ENCODE measurements at regions of chr1 and their contacts with region 1.

Region 1: GRCh38 chr1:44377925-44378784 is 23.1 kb upstream of the ERI3 start:
- DNase-seq: peak; percentile 24
- H3K4me3 ChIP-seq: no peak overlapping the region
- H3K27ac ChIP-seq: no peak overlapping the region
- H3K4me1 ChIP-seq: no peaks in the 10 kb centered on the region
- H3K27me3 ChIP-seq: peaks cover 3% of the 10 kb centered on the region
- CTCF ChIP-seq: peak; percentile 43 to 60 (median 49)
- EP300 ChIP-seq: no peak
- POLR2A ChIP-seq: no peak

Region 2: DNA sequence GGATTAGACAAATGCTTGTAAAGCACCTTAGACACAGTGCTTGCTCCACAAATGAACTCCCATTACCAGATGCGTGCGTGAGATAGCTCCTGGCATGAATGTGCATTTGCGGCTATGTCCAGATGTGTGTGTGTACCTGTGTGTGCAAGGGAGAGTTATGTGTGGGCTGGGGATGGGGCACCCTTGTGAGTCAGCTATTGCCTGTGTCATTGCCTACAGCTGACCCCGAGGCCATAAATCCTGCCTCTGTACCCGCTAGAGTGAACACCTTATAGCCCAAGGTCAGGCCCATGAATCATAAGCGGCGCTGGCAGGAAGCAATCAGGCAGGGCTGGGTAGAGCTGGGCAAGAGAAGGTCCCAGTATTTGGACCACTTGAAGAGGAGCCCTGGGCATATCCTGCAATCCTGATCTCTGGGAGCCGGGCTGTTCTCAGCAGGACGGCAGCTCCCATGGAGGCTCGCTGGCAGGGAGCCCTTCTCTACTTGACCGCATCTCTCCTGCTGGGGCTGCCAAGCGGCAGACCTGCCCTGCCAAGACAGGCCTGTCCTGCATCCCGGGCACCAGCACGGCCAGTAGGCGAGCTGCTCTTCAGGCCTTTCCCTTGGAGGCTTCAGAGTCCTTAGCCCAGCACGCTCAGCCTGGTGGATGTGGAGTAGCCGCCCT is 209.8 kb after region 1 on chr1:
- in situ Hi-C with region 1: loop called in 2 of 4 experiments (anchors 10 kb)
- intact Hi-C with region 1: loop called (anchors 10 kb)
- DNase-seq: peak; percentile 65
- H3K4me3 ChIP-seq: no peak overlapping the region
- H3K27ac ChIP-seq: peak overlapping the region in 1 of 4 donors; percentile 17
- H3K4me1 ChIP-seq: peaks cover 0 to 30% (median 7%) of the 10 kb centered on the region in 4 donors
- H3K27me3 ChIP-seq: peaks cover 78% of the 10 kb centered on the region
- CTCF ChIP-seq: no peak
- EP300 ChIP-seq: no peak
- POLR2A ChIP-seq: no peak

Region 3: DNA sequence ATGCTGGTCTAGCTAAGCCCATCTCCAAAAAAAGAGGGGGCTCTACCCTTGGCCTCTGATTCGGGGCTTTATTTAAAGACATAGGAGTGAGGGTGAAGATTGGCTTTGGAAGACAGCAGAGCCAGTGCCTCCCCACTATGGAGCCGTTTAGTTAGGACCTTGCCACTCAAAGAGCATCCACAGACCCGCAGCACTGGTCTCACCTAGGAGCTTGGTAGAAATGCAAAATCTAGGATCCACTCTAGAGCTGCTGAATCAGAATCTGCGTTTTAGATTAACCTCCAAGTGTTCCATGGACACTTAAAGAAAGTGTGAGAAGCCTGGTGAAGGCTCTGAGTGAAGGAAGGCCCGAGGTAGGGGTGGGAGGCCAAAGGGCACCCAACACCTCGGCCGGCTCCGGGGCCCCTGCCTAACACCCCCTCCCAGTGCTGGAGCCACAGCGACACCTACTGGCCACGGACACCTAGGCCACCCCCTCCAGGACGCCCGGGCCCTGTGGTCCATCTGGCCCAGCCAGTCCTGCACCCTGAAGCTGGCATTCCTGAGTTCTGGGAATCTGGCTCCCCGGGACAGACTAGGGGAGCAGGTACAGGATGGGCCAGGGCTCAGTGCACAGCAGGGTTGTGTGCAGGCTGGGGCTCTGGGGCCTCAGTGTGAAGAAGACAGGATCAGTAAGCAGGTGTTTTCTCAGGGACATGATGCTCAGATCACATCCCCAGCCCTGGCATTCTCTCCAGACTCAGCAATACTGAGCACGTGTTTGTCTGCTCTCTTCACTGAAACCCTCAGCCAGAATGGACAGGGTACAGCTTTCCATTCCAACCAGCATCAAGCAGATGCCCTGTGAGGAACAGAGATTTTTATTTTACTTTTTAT is 217.0 kb after region 1 on chr1:
- in situ Hi-C with region 1: loop called in 3 of 4 experiments (anchors 10 kb)
- intact Hi-C with region 1: loop called (anchors 10 kb)
- DNase-seq: peak; percentile 85
- H3K4me3 ChIP-seq: no peak overlapping the region
- H3K27ac ChIP-seq: no peak overlapping the region
- H3K4me1 ChIP-seq: no peaks in the 10 kb centered on the region
- H3K27me3 ChIP-seq: peaks cover 77% of the 10 kb centered on the region
- CTCF ChIP-seq: peak; percentile 92 to 98 (median 97)
- EP300 ChIP-seq: no peak
- POLR2A ChIP-seq: no peak

Region 4: GRCh38 chr1:44609412-44609767 is 231.2 kb after region 1 on chr1:
- in situ Hi-C with region 1: loop called in 2 of 4 experiments (anchors 10 kb)
- intact Hi-C with region 1: no loop called
- DNase-seq: peak; percentile 44
- H3K4me3 ChIP-seq: no peak overlapping the region
- H3K27ac ChIP-seq: no peak overlapping the region
- H3K4me1 ChIP-seq: peaks cover 0 to 3% (median under 1%) of the 10 kb centered on the region in 4 donors
- H3K27me3 ChIP-seq: no peaks in the 10 kb centered on the region
- CTCF ChIP-seq: peak; percentile 24 to 43 (median 36)
- EP300 ChIP-seq: no peak
- POLR2A ChIP-seq: no peak